Sciatic nerve (tissue), 2 donors: ENCODE measurements at regions of chr1 and their contacts with region 1.

Region 1: GRCh38 chr1:245234217-245235081 is 79.7 kb downstream of the KIF26B start:
- DNase-seq: no peak
- ATAC-seq: no peak

Region 2: GRCh38 chr1:244918421-244919319 is 315.8 kb before region 1 on chr1:
- intact Hi-C with region 1: no loop called
- DNase-seq: no peak
- ATAC-seq: peak; percentile 80

Region 3: GRCh38 chr1:245091818-245092637 is 142.4 kb before region 1 on chr1:
- intact Hi-C with region 1: no loop called
- DNase-seq: no peak
- ATAC-seq: peak; percentile 34

Region 4: DNA sequence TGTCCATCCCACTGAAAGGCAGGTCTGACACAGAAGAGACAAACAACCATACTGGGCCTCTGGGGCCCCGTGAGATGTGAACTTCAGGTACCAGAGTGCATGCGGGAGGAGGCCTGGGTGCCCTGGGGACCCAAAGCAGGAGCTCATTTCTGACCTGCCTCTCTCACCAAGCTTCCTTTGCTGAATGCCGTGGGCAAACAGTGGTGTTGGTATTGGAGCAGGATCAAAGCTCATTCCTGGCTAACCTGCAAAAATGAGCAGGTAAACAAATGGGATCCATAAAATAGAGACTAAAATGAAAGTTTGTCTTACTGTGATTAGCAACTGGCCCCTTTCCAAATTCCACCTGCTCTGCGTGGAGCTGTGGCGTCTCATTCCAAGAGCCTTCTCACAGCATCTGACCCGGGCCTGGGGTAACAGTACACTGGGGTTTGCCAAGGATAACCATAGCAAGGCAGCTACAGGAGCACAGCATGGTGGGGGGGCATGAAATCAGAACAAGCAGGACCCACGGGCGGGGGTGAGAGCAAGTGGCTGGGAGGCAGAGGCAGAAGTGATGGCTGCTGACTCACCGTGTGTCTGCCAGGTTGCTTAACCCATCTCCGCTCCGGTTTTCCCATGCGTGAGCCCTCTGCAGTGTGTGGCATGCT is 23.9 kb after region 1 on chr1:
- intact Hi-C with region 1: no loop called
- DNase-seq: no peak
- ATAC-seq: no peak

Region 5: GRCh38 chr1:245298781-245299180 is 64.3 kb after region 1 on chr1:
- intact Hi-C with region 1: loop called (anchors 2 kb)
- DNase-seq: no peak
- ATAC-seq: peak; percentile 73

Region 6: DNA sequence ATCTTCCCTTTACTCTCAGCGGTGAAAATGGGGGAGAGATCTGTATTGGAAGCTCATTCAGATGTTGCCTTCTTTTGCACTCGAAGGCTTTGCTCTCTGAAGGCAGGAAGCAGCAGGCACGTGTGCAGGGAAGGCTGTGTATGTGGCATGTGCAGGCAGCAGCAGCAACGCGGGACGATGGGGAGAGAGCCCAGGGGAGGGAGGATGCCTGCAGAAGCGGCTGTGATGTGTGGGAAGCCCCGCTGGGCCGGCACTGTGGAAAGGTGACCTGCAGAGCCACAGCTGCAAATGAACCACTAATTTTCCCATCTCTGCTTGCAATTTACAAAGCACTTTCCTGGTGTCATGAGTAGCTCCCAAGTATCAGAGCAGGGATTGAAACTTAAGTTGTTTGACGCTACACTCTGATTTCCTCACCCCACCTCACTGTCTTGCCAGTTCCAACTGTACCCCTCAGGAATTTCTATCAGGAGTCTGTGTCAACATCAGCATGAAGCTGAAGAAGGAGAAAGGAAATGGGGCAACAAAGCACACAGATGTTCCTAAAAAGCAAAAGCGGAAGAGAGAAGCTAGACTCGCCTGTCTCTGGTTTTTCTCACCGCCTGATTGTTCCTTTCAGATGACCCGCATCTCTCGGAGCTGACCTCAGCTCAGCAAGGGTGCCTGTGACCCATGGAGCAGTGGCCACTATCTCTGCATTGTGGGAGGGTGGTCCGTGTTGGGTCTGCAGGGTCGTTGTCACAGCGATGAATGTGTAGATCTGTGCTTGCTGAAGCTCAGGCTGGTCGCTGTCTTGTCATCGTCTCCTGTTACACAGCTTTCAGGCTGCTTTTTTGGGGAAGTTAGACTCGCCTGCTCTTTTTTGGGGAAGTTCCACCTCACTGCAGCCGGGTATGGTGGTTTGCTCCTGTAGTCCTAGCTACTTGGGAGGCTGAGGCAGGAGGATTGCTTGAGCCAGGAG is 76.4 kb after region 1 on chr1:
- intact Hi-C with region 1: no loop called
- DNase-seq: no peak
- ATAC-seq: peak; percentile 58